ENCODE measurements at regions of chr5 and their contacts with region 1.

Region 1: GRCh38 chr5:172015346-172015745 is 8.9 kb upstream of the FBXW11 start:
- DNase-seq: no peak
- ATAC-seq: no peak
- H3K4me3 ChIP-seq: no peak overlapping the region
- H3K27ac ChIP-seq: no peak overlapping the region
- H3K4me1 ChIP-seq: no peaks in the 10 kb centered on the region
- H3K27me3 ChIP-seq: no peaks in the 10 kb centered on the region
- CTCF ChIP-seq: no peak
- EP300 ChIP-seq: no peak
- POLR2A ChIP-seq: no peak
- RAD21 ChIP-seq: no peak

Region 2: GRCh38 chr5:172044631-172045314 is 29.4 kb after region 1 on chr5:
- CTCF ChIA-PET with region 1: interaction called, 9 read pairs
- POLR2A ChIA-PET with region 1: interaction called, 10 read pairs
- RAD21 ChIA-PET with region 1: interaction called, 5 read pairs
- SMC1A ChIA-PET with region 1: no interaction called
- in situ Hi-C with region 1: no loop called
- intact Hi-C with region 1: no loop called
- DNase-seq: no peak
- ATAC-seq: no peak
- H3K4me3 ChIP-seq: no peak overlapping the region
- H3K27ac ChIP-seq: no peak overlapping the region
- H3K4me1 ChIP-seq: no peaks in the 10 kb centered on the region
- H3K27me3 ChIP-seq: no peaks in the 10 kb centered on the region
- CTCF ChIP-seq: 0 out of 6 replicates have a peak, but pooled peaks of 1 of the 3 experiments have one; percentile 1
- EP300 ChIP-seq: no peak
- POLR2A ChIP-seq: no peak
- RAD21 ChIP-seq: peak; percentile 17; the same call in 1 of the 2 replicates

Region 3: GRCh38 chr5:172059661-172060100 is 44.3 kb after region 1 on chr5:
- CTCF ChIA-PET with region 1: no interaction called
- POLR2A ChIA-PET with region 1: no interaction called
- RAD21 ChIA-PET with region 1: no interaction called
- SMC1A ChIA-PET with region 1: no interaction called
- in situ Hi-C with region 1: no loop called
- intact Hi-C with region 1: no loop called
- DNase-seq: no peak
- ATAC-seq: peak; percentile 50
- H3K4me3 ChIP-seq: no peak overlapping the region
- H3K27ac ChIP-seq: no peak overlapping the region
- H3K4me1 ChIP-seq: no peaks in the 10 kb centered on the region
- H3K27me3 ChIP-seq: no peaks in the 10 kb centered on the region
- CTCF ChIP-seq: peak; percentile 43 to 49 (median 43)
- EP300 ChIP-seq: no peak
- POLR2A ChIP-seq: no peak
- RAD21 ChIP-seq: peak; percentile 59

Region 4: GRCh38 chr5:172777881-172778814 is 762.8 kb after region 1 on chr5:
- CTCF ChIA-PET with region 1: no interaction called
- POLR2A ChIA-PET with region 1: no interaction called
- RAD21 ChIA-PET with region 1: no interaction called
- SMC1A ChIA-PET with region 1: no interaction called
- in situ Hi-C with region 1: no loop called
- intact Hi-C with region 1: no loop called
- DNase-seq: no peak
- ATAC-seq: peak; percentile 49
- H3K4me3 ChIP-seq: peak overlapping the region; percentile 34
- H3K27ac ChIP-seq: peak overlapping the region; percentile 93
- H3K4me1 ChIP-seq: peaks cover 21% of the 10 kb centered on the region
- H3K27me3 ChIP-seq: no peaks in the 10 kb centered on the region
- CTCF ChIP-seq: no peak
- EP300 ChIP-seq: no peak
- POLR2A ChIP-seq: no peak
- RAD21 ChIP-seq: no peak